Colonic mucosa (tissue), 4 donors: ENCODE measurements at regions of chr15 and their contacts with region 1.

Region 1: DNA sequence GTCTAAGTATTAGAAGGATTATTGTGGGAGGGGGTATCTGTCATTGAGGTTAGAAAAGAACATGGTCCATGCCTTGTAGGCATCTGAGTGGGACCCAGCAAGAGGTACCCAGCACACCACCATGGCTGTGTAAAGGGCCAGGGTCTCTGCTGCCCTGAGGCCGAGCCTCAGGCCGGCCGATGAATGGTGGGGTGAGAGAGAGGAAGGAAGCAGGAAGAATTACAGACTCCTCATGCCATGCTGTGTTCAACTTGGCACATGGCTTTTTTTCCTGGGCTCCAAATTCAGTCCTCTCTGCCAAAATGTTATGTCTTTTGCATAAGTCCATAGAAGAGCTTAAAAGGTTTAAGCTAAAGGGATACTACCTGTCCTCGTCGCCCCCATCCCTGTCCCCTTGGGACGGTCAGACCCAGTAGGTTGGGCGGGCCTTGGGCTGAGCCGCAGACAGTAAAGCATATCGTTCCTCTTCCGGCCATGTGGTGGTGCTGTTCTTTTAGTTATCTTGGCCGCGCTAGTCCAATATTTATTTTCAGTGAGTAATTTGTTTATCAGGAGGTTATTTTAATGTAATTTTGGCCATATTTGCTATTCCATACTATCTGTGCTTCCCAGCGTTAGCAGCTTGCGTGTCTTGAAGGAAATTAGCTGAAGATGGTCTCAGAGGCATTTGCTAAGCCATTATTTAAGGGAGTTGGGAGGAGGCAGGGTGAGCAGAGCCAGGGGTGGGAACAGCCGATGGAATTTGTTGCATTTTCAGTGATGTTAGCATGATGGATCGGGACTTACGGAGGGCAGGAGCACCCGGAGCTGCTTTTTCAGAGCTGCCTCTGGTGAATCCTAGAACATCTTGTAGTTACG is 152.4 kb downstream of the AGBL1 start:
- DNase-seq: peak; percentile 31
- H3K4me3 ChIP-seq: no peak overlapping the region
- H3K27ac ChIP-seq: no peak overlapping the region
- H3K4me1 ChIP-seq: no peaks in the 10 kb centered on the region
- H3K27me3 ChIP-seq: no peaks in the 10 kb centered on the region
- CTCF ChIP-seq: peak; percentile 58

Region 2: GRCh38 chr15:85865070-85865684 is 366.9 kb before region 1 on chr15:
- intact Hi-C with region 1: loop called (anchors 10 kb)
- DNase-seq: no peak
- H3K4me3 ChIP-seq: no peak overlapping the region
- H3K27ac ChIP-seq: no peak overlapping the region
- H3K4me1 ChIP-seq: no peaks in the 10 kb centered on the region
- H3K27me3 ChIP-seq: no peaks in the 10 kb centered on the region
- CTCF ChIP-seq: peak; percentile 30

Region 3: GRCh38 chr15:86213420-86214287 is 18.4 kb before region 1 on chr15:
- intact Hi-C with region 1: no loop called
- DNase-seq: no peak
- H3K4me3 ChIP-seq: no peak overlapping the region
- H3K27ac ChIP-seq: no peak overlapping the region
- H3K4me1 ChIP-seq: no peaks in the 10 kb centered on the region
- H3K27me3 ChIP-seq: no peaks in the 10 kb centered on the region
- CTCF ChIP-seq: no peak

Region 4: GRCh38 chr15:86355801-86356200 is 123.7 kb after region 1 on chr15:
- intact Hi-C with region 1: no loop called
- DNase-seq: no peak
- H3K4me3 ChIP-seq: no peak overlapping the region
- H3K27ac ChIP-seq: no peak overlapping the region
- H3K4me1 ChIP-seq: no peaks in the 10 kb centered on the region
- H3K27me3 ChIP-seq: no peaks in the 10 kb centered on the region
- CTCF ChIP-seq: no peak

Region 5: GRCh38 chr15:86743283-86743903 is 511.3 kb after region 1 on chr15:
- intact Hi-C with region 1: loop called (anchors 10 kb)
- DNase-seq: peak; percentile 65
- H3K4me3 ChIP-seq: no peak overlapping the region
- H3K27ac ChIP-seq: no peak overlapping the region
- H3K4me1 ChIP-seq: no peaks in the 10 kb centered on the region
- H3K27me3 ChIP-seq: no peaks in the 10 kb centered on the region
- CTCF ChIP-seq: peak; percentile 58